ENCODE measurements at regions of chr3 and their contacts with region 1.

Region 1: GRCh38 chr3:52220380-52221026 is 4.9 kb downstream of the TLR9 start:
- DNase-seq: peak; percentile 92
- ATAC-seq: peak; percentile 84
- H3K4me3 Mint-ChIP-seq: no peak overlapping the region
- H3K27ac Mint-ChIP-seq: no peak overlapping the region
- H3K4me1 Mint-ChIP-seq: peaks cover 7% of the 10 kb centered on the region
- H3K27me3 Mint-ChIP-seq: no peaks in the 10 kb centered on the region
- CTCF ChIP-seq: peak; percentile 95

Region 2: DNA sequence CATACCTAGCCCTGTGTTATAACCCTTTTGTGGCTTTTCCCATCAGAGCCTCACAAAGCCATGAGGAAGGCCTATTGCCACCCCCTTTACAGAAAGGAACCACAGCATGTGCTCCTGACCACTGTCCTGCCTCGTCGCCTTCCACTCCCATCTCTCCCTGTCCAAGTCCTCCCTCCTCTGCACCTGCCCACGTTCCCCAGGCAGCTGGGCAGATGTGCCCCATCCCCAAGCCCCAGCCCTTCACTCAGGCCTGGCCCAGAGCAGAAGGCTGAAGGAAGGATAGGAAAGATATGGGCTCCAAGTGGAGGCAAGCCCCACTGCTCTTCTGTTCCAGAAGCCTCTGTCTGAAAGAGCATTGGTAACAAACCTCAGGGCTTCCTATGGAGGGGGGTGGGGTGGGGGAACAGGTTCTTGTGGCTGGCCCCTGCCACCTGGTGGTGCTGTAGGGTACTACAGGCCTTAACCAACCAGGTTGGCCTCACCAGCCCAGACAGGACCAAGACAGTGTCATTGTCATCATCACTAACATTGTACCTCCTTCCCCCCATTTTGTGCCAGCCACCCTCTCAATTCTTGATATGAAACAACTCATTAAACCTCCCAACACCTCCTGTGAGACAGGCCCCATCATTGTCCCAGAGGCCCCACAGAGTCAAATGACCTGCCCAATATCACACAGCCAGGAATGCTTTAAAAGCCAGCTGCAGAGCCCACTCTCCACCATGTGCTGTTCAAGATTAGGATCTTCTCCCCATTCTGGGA is 76.3 kb before region 1 on chr3:
- CTCF ChIA-PET with region 1: interaction called, 10 read pairs
- POLR2A ChIA-PET with region 1: no interaction called
- DNase-seq: peak; percentile 87
- ATAC-seq: peak; percentile 93
- H3K4me3 Mint-ChIP-seq: no peak overlapping the region
- H3K27ac Mint-ChIP-seq: peak overlapping the region; percentile 41; the same call in 1 of the 2 replicates
- H3K4me1 Mint-ChIP-seq: peaks cover 5% of the 10 kb centered on the region
- H3K27me3 Mint-ChIP-seq: no peaks in the 10 kb centered on the region
- CTCF ChIP-seq: peak; percentile 98

Region 3: DNA sequence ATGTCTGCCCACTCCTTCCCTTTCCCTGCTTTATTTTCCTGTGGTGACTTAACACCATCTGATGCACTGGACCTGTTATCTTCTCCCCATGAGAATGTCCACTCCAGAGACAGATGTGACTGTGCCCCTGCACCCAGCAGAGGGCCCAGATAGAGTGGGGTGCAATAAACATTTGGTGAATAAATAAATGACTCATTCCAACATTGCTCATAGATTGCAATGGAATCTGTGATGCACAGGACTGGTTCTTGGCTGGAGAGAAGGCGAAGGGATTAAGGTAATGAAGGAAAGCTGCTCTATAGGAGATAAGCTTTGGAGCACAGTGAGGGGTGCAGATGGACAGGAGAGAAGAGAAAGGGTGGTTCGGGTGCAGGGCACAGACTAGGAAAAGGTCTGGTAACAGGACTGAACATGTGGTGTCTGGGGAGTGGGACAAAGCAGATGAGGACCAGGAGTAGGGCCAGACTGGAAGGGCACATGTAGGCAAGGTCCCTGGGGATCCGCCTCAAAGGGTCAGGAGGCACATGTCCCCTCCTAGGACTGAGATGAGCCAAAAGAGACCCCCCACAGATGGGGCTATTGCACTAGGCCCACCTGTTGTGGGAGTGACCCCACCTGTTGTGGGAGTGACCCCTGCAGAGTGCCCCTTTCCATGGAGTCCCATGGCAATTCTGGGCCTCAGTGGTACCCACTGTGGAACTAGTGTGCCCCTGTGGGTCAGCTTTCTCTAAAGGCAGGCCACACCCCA is 48.8 kb before region 1 on chr3:
- CTCF ChIA-PET with region 1: interaction called, 23 read pairs
- POLR2A ChIA-PET with region 1: no interaction called
- DNase-seq: no peak
- ATAC-seq: no peak
- H3K4me3 Mint-ChIP-seq: no peak overlapping the region
- H3K27ac Mint-ChIP-seq: 0 out of 2 replicates have a peak overlapping the region, but pooled peaks have one; percentile 1
- H3K4me1 Mint-ChIP-seq: peaks cover 15% of the 10 kb centered on the region
- H3K27me3 Mint-ChIP-seq: no peaks in the 10 kb centered on the region
- CTCF ChIP-seq: no peak

Region 4: GRCh38 chr3:52245322-52246263 is 25.1 kb after region 1 on chr3 and contains the start of gene PPM1M:
- CTCF ChIA-PET with region 1: interaction called, 23 read pairs
- POLR2A ChIA-PET with region 1: interaction called, 3 read pairs
- DNase-seq: peak; percentile 72
- ATAC-seq: peak; percentile 86
- H3K4me3 Mint-ChIP-seq: peak within 1 kb of the TSS; percentile 67
- H3K27ac Mint-ChIP-seq: no peak within 1 kb of the TSS
- H3K4me1 Mint-ChIP-seq: peaks cover 15% of the 10 kb centered on the region
- H3K27me3 Mint-ChIP-seq: peaks cover 50% of the 10 kb centered on the region
- CTCF ChIP-seq: no peak
- total RNA-seq, gene PPM1M: 5.1 to 7.0 TPM (median 6.0 TPM) in 3 replicates

Region 5: DNA sequence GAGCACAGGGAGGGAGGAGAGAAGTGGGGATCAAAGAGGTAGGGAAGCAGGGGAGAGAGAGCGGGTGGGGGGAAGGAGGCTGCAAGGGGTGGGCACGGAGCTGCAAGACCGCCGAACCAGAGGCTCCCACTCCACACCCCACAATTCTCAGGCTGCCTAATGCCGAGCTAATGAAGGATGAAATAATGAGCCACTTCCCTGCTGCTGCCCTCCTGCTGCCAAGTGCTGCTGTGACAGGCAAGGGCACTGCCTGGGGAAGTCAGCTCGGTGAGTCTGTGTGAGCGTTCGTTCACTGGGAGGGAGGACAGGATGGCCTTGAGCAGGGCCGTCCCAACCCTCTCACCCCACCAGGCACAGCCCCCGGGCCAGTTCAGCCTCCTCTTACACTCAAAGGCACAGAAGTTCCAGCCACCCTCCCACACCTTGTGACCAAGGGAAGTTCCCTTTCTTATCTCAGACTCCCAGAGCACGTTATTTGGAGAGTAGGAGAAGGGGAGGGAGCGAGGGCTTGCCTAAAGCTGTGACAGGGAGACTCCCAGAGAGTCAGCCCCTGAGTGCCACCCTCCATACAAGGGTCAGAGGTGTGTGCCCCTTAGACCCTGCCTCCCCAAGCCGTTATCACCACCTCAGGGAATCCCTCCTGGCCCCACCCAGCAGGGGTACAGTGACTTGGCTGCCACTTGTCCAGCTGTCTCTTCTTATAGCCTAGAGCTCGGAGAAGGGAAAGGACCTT is 79.5 kb after region 1 on chr3:
- CTCF ChIA-PET with region 1: interaction called, 16 read pairs
- POLR2A ChIA-PET with region 1: no interaction called
- DNase-seq: peak; percentile 26
- ATAC-seq: peak; percentile 55
- H3K4me3 Mint-ChIP-seq: peak overlapping the region; percentile 65
- H3K27ac Mint-ChIP-seq: no peak overlapping the region
- H3K4me1 Mint-ChIP-seq: peaks cover 18% of the 10 kb centered on the region
- H3K27me3 Mint-ChIP-seq: peaks cover 6% of the 10 kb centered on the region
- CTCF ChIP-seq: no peak

Region 6: DNA sequence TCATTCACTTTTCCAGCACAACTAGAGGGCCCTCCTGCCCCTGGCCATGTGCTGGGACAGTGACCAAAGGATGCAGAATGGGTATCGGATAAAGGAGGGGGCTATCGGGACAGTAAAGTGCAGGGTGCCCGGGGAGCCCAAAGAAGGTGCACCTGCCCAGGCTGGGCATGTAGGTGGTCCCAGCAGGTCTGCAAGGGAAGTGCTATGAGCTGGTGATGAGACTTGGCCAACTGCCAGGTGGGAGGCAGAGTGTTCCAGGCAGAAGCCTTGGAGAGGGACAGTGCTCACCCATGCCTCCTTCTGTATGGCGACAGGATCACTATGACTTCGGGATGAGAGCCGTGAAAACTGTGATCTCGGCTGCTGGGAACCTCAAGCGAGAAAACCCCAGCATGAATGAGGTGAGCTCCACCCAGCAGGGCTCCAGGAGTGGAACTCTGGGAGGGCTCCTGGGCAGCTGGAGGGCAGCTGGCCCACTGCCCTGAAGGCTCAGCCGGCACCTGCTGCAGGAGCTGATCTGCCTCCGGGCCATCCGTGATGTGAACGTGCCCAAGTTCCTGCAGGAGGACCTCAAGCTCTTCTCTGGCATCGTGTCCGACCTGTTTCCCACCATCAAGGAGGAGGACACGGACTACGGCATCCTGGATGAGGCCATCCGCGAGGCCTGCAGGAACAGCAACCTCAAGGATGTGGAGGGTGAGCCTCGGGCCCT is 144.0 kb after region 1 on chr3:
- CTCF ChIA-PET with region 1: interaction called, 11 read pairs
- POLR2A ChIA-PET with region 1: no interaction called
- DNase-seq: no peak
- ATAC-seq: no peak
- H3K4me3 Mint-ChIP-seq: no peak overlapping the region
- H3K27ac Mint-ChIP-seq: no peak overlapping the region
- H3K4me1 Mint-ChIP-seq: peaks cover 11% of the 10 kb centered on the region
- H3K27me3 Mint-ChIP-seq: no peaks in the 10 kb centered on the region
- CTCF ChIP-seq: no peak

Measured in WTC11 (cell line).